CD8-positive, alpha-beta T cell (primary cell): ENCODE measurements at regions of chr3 and their contacts with region 1.

Region 1: DNA sequence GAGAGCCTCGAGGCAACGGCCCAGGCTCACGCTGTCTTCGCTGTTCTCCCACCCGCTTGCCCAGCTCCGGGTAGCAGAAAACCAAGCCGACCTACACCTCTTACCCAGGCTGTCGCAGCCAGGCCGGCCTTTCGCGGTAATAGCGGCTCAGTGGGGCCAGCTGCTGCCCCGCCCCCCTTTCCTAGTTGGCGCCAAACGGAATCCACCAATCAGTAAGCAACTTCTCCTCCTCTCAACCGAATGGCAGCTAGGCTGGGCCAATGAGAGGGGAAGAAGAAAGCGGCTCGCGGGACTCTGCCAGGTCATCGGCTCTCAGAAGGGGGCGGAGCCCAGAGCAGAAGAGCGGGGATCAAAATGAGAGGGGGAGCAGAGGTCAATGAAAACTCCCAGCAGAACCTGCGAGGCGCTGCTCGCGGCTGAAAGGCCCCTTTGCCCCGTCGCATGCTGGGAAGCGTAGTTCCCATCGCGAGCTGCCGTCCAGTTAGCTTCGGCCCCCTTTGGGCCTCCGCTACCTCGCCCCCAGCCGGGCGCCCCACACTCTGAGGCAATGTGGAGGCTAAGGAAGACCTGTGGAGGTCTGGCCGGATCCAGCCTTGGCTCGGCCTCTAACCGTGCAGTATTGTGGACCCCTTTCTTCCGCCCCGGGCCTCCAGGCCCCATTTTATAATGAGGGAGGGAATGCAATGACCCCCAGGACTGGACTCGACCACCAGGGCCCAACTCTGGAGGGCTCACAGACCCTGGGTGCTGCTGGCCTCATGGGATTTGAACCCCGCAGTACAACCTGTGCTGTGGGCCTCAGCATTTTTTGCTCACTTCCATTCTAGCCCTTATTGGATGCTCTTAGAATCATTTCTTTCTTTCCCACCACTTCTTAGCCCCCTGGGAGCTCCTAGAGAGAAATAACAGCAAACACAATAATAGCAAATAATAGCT is at the start of gene CDC25A:
- DNase-seq: peak; percentile 85 to 97 (median 92)
- ATAC-seq: peak; percentile 99
- H3K4me3 ChIP-seq: peak within 1 kb of the TSS; percentile 73 to 86
- H3K4me3 Mint-ChIP-seq: peak within 1 kb of the TSS; percentile 93
- H3K27ac ChIP-seq: peak within 1 kb of the TSS in 1 of 2 experiments; percentile 68
- H3K27ac Mint-ChIP-seq: peak within 1 kb of the TSS; percentile 45
- H3K4me1 ChIP-seq: peaks cover 12% of the 10 kb centered on the region
- H3K4me1 Mint-ChIP-seq: peaks cover 14% of the 10 kb centered on the region
- H3K27me3 ChIP-seq: peaks cover 4 to 6% of the 10 kb centered on the region in 2 experiments
- H3K27me3 Mint-ChIP-seq: peaks cover 21% of the 10 kb centered on the region
- CTCF ChIP-seq: no peak
- total RNA-seq, gene CDC25A: 0.31 TPM in 1 of 2 experiments, not detected in the other

Region 2: DNA sequence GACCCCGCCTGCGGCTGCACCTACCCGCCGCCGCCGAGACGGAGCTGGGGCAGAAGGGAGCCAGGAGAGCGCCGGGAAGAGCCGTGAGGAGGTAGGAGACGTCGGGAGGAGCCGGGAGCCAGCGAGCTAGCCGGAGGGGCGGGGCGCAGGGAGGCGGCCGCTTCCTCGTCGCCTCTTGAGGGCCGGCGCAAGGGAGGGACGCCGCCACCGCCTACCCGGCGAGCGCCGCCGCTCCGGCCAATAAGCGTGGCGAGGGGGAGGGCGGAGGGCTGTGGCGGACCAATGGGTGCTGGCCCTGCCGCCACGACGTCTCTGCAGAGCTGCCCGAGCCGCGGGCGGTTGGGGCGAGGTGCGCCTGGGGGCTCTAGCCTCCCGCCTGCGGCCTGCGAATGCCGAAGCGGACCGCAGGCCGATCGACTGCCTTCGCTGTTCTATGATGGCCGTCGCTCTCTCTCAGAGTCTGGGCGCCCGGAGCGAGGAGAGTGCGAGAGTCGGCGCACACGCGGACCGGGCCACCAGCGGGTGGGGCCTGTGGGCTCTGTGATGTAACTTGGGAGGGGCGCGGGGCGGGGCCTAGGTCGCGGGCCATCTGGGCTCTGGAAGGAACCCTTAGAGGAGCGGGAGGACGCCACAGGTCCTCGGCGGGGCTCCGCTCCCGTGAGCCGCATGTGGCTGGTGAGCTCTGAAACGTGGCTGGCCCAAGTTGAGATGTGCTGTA is 99.6 kb before region 1 on chr3:
- CTCF ChIA-PET with region 1: no interaction called
- POLR2A ChIA-PET with region 1: interaction called, 3 read pairs
- intact Hi-C with region 1: loop called (anchors 1 to 2 kb)
- DNase-seq: peak; percentile 89 to 97 (median 94)
- ATAC-seq: peak; percentile 91
- H3K4me3 ChIP-seq: peak overlapping the region; percentile 80 to 100
- H3K4me3 Mint-ChIP-seq: peak overlapping the region; percentile 96
- H3K27ac ChIP-seq: peak overlapping the region; percentile 86 to 95
- H3K27ac Mint-ChIP-seq: peak overlapping the region; percentile 98
- H3K4me1 ChIP-seq: peaks cover 18% of the 10 kb centered on the region
- H3K4me1 Mint-ChIP-seq: peaks cover 33% of the 10 kb centered on the region
- H3K27me3 ChIP-seq: no peaks in the 10 kb centered on the region
- H3K27me3 Mint-ChIP-seq: no peaks in the 10 kb centered on the region
- CTCF ChIP-seq: no peak

Region 3: DNA sequence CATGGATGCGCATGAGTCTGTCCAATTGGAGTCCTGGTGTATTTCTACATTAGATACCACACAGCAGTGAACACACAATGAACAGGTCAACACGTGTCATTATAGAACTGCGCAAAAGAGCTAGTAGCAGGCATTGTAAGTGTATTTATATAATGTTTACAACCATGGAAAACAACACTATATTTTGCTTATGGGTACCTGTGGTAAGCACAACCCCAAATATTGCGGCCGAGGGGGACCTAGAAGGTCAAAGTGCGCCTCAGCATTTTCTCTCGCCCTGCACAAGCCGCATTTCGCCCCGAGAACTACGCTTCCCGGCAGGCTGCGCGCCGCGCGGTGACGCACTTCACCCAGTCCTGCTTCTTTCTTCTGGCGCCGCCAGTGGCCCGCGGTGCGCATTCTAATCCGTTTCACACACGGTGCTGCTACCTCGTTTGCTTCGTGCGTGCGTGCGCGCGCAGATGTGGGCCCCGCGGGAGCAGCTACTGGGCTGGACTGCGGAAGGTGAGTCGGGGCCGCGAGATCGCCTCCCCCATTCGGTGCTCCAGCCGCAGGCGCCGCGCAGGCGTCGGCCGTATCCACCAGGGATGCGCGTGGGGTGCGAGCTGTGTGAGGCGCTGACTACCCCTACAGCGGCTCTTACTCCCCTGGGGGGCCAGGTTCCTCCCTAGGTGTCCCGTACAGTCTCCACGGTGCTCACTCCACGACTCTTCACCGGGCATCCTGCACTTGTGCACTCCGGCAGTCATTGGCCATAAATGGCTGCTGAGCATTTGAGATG is 52.4 kb after region 1 on chr3 and contains the start of gene ZNF589:
- CTCF ChIA-PET with region 1: no interaction called
- POLR2A ChIA-PET with region 1: interaction called, 8 read pairs
- intact Hi-C with region 1: loop called (anchors 1 to 2 kb)
- DNase-seq: peak; percentile 91 to 97 (median 94)
- ATAC-seq: peak; percentile 97
- H3K4me3 ChIP-seq: peak within 1 kb of the TSS; percentile 66 to 90
- H3K4me3 Mint-ChIP-seq: peak within 1 kb of the TSS; percentile 92
- H3K27ac ChIP-seq: peak within 1 kb of the TSS; percentile 62 to 85
- H3K27ac Mint-ChIP-seq: peak within 1 kb of the TSS; percentile 93
- H3K4me1 ChIP-seq: peaks cover 23% of the 10 kb centered on the region
- H3K4me1 Mint-ChIP-seq: peaks cover 28% of the 10 kb centered on the region
- H3K27me3 ChIP-seq: no peaks in the 10 kb centered on the region
- H3K27me3 Mint-ChIP-seq: no peaks in the 10 kb centered on the region
- CTCF ChIP-seq: peak; percentile 31
- total RNA-seq, gene ZNF589: 18.9 to 20.9 TPM

Region 4: GRCh38 chr3:48301020-48301796 is 112.7 kb after region 1 on chr3:
- CTCF ChIA-PET with region 1: no interaction called
- POLR2A ChIA-PET with region 1: no interaction called
- intact Hi-C with region 1: loop called (anchors 1 kb)
- DNase-seq: peak; percentile 82 to 94 (median 90)
- ATAC-seq: peak; percentile 85
- H3K4me3 ChIP-seq: peak within 1 kb of the TSS; percentile 85 to 97
- H3K4me3 Mint-ChIP-seq: peak within 1 kb of the TSS; percentile 87
- H3K27ac ChIP-seq: peak within 1 kb of the TSS; percentile 85 to 90
- H3K27ac Mint-ChIP-seq: peak within 1 kb of the TSS; percentile 91
- H3K4me1 ChIP-seq: peaks cover 23% of the 10 kb centered on the region
- H3K4me1 Mint-ChIP-seq: peaks cover 34% of the 10 kb centered on the region
- H3K27me3 ChIP-seq: no peaks in the 10 kb centered on the region
- H3K27me3 Mint-ChIP-seq: no peaks in the 10 kb centered on the region
- CTCF ChIP-seq: no peak

Region 5: GRCh38 chr3:48609088-48610005 is 420.8 kb after region 1 on chr3 and contains the start of gene UQCRC1:
- CTCF ChIA-PET with region 1: no interaction called
- POLR2A ChIA-PET with region 1: no interaction called
- intact Hi-C with region 1: loop called in 1 of 2 experiments (anchors 2 kb)
- DNase-seq: peak; percentile 82 to 96 (median 90)
- ATAC-seq: peak; percentile 99
- H3K4me3 ChIP-seq: peak within 1 kb of the TSS; percentile 78 to 99
- H3K4me3 Mint-ChIP-seq: peak within 1 kb of the TSS; percentile 99
- H3K27ac ChIP-seq: peak within 1 kb of the TSS; percentile 68 to 87
- H3K27ac Mint-ChIP-seq: peak within 1 kb of the TSS; percentile 98
- H3K4me1 ChIP-seq: peaks cover 15% of the 10 kb centered on the region
- H3K4me1 Mint-ChIP-seq: peaks cover 16% of the 10 kb centered on the region
- H3K27me3 ChIP-seq: no peaks in the 10 kb centered on the region
- H3K27me3 Mint-ChIP-seq: no peaks in the 10 kb centered on the region
- CTCF ChIP-seq: peak; percentile 78
- total RNA-seq, gene UQCRC1: 84.2 to 92.5 TPM

Region 6: GRCh38 chr3:49469936-49470713 is 1281.6 kb after region 1 on chr3 and contains the start of gene DAG1:
- CTCF ChIA-PET with region 1: no interaction called
- POLR2A ChIA-PET with region 1: no interaction called
- intact Hi-C with region 1: loop called in 1 of 2 experiments (anchors 5 kb)
- DNase-seq: peak; percentile 89 to 99 (median 95)
- ATAC-seq: peak; percentile 85
- H3K4me3 ChIP-seq: peak within 1 kb of the TSS; percentile 83 to 97
- H3K4me3 Mint-ChIP-seq: peak within 1 kb of the TSS; percentile 88
- H3K27ac ChIP-seq: peak within 1 kb of the TSS; percentile 86 to 87
- H3K27ac Mint-ChIP-seq: peak within 1 kb of the TSS; percentile 94
- H3K4me1 ChIP-seq: peaks cover 21% of the 10 kb centered on the region
- H3K4me1 Mint-ChIP-seq: peaks cover 24% of the 10 kb centered on the region
- H3K27me3 ChIP-seq: no peaks in the 10 kb centered on the region
- H3K27me3 Mint-ChIP-seq: no peaks in the 10 kb centered on the region
- CTCF ChIP-seq: no peak
- total RNA-seq, gene DAG1: 17.0 to 19.9 TPM